Endothelial cell of umbilical vein (primary cell): ENCODE measurements at regions of chr19 and their contacts with region 1.

Region 1: DNA sequence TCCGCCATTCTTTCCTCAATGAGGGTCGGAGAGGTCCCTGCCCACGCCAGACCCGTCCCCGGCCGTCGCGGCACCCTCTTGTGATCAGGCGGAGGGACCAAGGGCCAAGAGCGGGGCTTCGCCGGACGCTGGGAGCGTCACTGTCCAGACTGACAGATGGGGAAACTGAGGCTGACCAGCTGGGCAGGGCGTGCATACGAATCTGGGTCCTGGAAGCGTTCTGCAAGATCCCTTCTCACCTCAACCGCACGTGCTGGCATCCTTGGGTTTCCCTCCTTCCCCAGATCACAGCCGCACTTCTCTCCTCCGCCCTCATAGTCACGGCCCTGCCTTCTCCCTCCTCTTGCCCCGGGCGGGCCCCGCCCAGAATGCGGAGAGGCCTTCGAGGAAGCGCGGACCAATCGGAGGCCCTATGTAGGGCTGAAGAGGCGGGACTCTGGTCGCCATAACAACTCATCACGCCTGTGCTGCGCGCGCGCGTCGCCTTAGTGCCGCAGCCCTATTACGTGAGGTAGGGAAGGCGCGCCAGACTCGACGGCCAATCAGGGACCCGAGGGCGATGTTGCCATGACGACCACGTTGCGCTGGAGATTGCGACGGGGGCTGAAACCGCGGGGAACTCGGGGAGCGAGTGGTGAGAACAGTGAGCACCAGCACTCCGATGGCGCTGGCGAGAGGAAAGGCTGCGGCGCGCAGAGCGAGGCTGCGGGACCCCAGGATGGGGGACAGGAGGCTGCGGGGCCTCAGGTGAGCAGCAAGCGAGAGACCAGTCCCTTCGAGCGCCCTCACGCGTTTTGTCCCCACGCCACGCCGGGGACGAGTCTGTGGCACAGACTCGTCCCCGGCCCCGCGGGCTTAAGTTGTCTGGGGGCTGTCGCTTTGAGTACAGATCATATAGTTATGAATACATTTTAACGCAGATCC is 5.7 kb downstream of the RNF225 start:
- DNase-seq: peak; percentile 100
- H3K4me3 ChIP-seq: peak overlapping the region in 2 of 3 experiments; percentile 41 to 43
- H3K27ac ChIP-seq: no peak overlapping the region
- H3K4me1 ChIP-seq: peaks cover 12% of the 10 kb centered on the region
- H3K27me3 ChIP-seq: no peaks in the 10 kb centered on the region
- CTCF ChIP-seq: no peak
- POLR2A ChIP-seq: peak; percentile 22

Region 2: DNA sequence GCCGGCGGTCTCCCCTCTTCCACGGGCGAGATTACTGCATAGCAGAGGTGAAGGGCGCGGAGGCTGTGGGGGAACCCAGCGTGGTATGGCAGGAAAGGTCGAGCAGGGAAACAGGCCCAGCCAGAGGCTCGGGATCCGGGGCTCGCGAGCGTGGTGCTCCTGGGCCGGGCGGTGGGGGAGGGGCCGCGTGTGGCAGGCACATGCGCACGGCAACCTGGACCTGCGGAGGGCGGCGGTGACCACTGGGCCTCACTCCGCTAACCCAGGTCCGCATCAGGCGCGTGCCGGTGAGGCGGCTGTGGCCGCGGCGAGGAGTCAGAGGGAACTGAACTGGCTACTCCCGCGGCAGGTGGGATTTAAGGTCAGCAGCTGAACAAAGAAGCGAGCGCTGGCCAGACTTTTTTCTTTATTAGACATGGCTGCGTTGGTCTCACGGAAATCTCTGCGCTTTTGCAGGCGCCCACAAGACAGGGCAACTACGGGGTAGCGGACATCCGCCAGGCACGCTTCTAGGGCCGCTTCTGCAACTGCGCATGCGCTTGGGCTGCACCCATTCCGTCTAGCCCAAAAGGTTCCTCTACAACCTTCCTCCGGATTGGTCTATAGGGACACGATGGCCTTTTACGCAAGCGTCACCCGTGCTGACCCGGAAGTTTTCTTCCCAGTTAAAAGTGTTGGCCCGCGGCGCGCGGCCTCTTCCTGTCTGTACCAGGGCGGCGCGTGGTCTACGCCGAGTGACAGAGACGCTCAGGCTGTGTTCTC is 14.4 kb before region 1 on chr19 and contains the start of gene RPS5:
- CTCF ChIA-PET with region 1: no interaction called
- POLR2A ChIA-PET with region 1: no interaction called
- dilution Hi-C with region 1: no loop called
- intact Hi-C with region 1: loop called (anchors 1 kb)
- DNase-seq: peak; percentile 98
- H3K4me3 ChIP-seq: peak within 1 kb of the TSS; percentile 67 to 93 (median 75)
- H3K27ac ChIP-seq: peak within 1 kb of the TSS; percentile 88
- H3K4me1 ChIP-seq: peaks cover 17% of the 10 kb centered on the region
- H3K27me3 ChIP-seq: no peaks in the 10 kb centered on the region
- CTCF ChIP-seq: no peak
- POLR2A ChIP-seq: peak; percentile 97
- total RNA-seq, gene RPS5: 945 and 993 TPM in 2 replicates

Region 3: DNA sequence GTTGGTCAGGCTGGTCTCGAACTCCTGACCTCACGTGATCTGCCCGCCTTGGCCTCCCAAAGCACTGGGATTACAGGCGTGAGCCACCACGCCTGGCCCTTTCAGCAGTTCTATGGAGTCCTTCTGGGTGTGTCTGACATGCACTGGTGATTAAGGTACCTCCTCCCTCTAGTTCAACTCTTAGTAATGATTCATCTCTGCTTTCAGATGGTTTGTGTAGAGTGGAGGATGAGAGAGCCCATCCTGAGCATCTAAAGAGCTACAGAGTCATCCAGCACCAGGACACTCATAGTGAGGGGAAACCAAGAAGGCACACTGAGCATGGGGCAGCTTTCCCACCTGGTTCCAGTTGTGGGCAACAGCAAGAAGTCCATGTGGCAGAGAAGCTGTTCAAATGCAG is 15.4 kb after region 1 on chr19:
- CTCF ChIA-PET with region 1: no interaction called
- POLR2A ChIA-PET with region 1: no interaction called
- dilution Hi-C with region 1: no loop called
- intact Hi-C with region 1: no loop called
- DNase-seq: no peak
- H3K4me3 ChIP-seq: no peak overlapping the region
- H3K27ac ChIP-seq: no peak overlapping the region
- H3K4me1 ChIP-seq: no peaks in the 10 kb centered on the region
- H3K27me3 ChIP-seq: no peaks in the 10 kb centered on the region
- CTCF ChIP-seq: no peak
- POLR2A ChIP-seq: no peak